A673 (cell line): ENCODE measurements at regions of chr16 and their contacts with region 1.

Region 1: DNA sequence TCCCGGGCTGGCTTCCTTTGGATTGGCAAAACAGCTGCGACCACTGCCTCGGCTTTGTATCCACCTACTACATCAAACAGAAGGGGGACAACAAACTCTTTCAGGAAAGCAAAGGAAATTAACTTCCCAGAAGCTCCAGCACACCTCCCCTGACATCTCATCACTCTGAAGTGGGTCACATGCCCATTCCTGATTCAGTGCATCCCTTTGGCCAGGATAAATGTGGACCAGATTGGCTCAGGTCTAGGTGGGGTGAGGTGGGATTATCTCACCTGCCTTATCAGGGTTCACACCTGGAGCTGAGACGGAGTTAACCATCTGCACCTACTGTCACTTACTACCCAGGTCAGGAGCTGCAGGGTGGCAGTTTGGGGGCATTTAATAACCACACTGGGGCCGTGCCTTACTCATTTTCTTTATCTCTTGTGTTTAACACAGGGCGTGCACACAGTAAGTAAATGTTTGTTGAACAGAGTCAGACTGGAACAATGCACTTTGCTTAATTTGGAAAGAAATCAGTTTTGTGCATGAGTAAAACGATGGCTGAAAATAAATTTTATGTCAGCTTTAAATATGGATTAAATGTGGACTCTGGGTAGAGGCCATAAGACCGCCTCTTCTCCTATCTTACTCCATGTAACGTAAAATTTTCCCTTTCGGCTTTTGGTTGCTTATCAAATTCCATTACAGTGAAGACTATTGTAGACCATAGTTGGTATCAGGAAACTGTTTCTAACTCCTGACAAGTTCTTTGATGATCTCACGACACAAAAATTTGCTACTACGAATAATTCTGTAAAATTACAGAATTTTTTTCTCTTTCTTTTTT is 36.0 kb downstream of the IQCK start:
- DNase-seq: no peak
- H3K4me3 ChIP-seq: no peak overlapping the region
- H3K27ac ChIP-seq: no peak overlapping the region
- H3K4me1 ChIP-seq: no peaks in the 10 kb centered on the region
- H3K27me3 ChIP-seq: no peaks in the 10 kb centered on the region
- CTCF ChIP-seq: no peak

Region 2: GRCh38 chr16:19737306-19738038 is 16.6 kb before region 1 on chr16:
- CTCF ChIA-PET with region 1: no interaction called
- POLR2A ChIA-PET with region 1: interaction called, 3 read pairs
- intact Hi-C with region 1: loop called (anchors 1 kb)
- DNase-seq: no peak
- H3K4me3 ChIP-seq: no peak overlapping the region
- H3K27ac ChIP-seq: no peak overlapping the region
- H3K4me1 ChIP-seq: no peaks in the 10 kb centered on the region
- H3K27me3 ChIP-seq: no peaks in the 10 kb centered on the region
- CTCF ChIP-seq: no peak